Activated CD4-positive, alpha-beta T cell treated with anti-CD3 and anti-CD28 coated beads, Interleukin-2, amount 10 ng/mL, durations not matched to agents 24 days and 14 days (primary cell): ENCODE measurements at regions of chr4 and their contacts with region 1.

Region 1: DNA sequence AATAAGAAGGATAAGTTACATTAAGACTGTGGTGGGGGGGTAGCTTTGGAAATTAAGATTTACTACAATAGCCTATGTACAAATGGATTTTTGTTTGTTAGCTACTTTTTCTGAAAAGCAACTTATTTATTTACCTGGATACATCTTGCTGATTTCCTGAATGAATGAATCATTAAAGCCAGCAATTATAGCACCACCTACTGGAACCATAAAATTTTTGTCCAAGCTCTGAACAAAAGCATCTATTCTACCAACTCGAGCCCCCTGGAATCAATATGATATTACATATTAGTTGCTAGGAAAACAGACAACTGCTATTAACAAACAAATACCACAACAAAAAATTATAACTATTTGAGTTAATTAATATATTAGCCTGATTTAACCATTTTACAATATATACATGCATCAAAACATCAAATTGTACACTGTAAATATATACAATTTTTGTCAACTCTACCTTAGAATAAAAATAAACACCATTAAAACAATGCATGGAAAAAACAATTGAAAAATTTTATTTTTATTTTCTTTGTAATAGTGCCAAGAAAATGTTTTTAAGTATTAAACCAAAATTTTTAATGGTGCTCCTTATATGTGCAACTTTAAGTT is 15.3 kb downstream of the SEPSECS start:
- DNase-seq: peak; percentile 53
- H3K4me3 Mint-ChIP-seq: no peak overlapping the region
- H3K27ac Mint-ChIP-seq: no peak overlapping the region
- H3K4me1 Mint-ChIP-seq: no peaks in the 10 kb centered on the region
- H3K27me3 Mint-ChIP-seq: no peaks in the 10 kb centered on the region

Region 2: GRCh38 chr4:24980064-24980690 is 164.8 kb before region 1 on chr4:
- intact Hi-C with region 1: loop called (anchors 1 kb)
- DNase-seq: peak; percentile 86
- H3K4me3 Mint-ChIP-seq: peak overlapping the region; percentile 26
- H3K27ac Mint-ChIP-seq: no peak overlapping the region
- H3K4me1 Mint-ChIP-seq: peaks cover 10% of the 10 kb centered on the region
- H3K27me3 Mint-ChIP-seq: peaks cover 19% of the 10 kb centered on the region

Region 3: GRCh38 chr4:25043548-25043947 is 101.4 kb before region 1 on chr4:
- intact Hi-C with region 1: loop called (anchors 10 kb)
- DNase-seq: no peak
- H3K4me3 Mint-ChIP-seq: no peak overlapping the region
- H3K27ac Mint-ChIP-seq: no peak overlapping the region
- H3K4me1 Mint-ChIP-seq: no peaks in the 10 kb centered on the region
- H3K27me3 Mint-ChIP-seq: peaks cover 10% of the 10 kb centered on the region

Region 4: DNA sequence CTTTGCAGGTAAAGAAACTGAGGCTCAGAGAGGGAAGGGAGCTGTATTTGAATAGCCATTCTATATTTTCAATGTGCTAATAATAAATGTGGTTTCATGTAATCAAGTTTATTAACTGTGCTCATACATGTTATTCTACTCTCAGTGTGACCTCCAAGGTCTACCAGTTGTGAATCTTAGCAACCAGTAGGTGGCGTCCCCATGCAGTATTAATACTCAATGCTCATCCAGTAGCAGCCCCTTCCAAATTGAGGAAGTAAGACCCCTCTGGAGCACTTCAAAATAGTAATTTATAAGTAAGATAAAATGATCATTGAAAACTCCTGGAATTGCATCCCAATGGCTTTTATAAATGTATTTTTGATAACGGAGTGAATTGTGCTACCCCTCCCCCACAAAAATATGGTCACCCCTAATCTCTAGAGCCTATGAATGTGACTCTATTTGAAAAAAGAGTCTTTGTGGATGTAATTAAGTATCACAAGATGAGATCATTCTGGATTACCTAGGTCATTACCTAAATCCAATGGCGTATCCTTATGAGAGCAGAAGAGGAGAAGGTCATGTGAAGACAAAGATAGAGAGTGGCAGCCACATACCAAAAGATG is 35.7 kb after region 1 on chr4:
- intact Hi-C with region 1: no loop called
- DNase-seq: peak; percentile 78
- H3K4me3 Mint-ChIP-seq: no peak overlapping the region
- H3K27ac Mint-ChIP-seq: no peak overlapping the region
- H3K4me1 Mint-ChIP-seq: peaks cover 19% of the 10 kb centered on the region
- H3K27me3 Mint-ChIP-seq: no peaks in the 10 kb centered on the region